ENCODE measurements at regions of chr9 and their contacts with region 1.

Region 1: DNA sequence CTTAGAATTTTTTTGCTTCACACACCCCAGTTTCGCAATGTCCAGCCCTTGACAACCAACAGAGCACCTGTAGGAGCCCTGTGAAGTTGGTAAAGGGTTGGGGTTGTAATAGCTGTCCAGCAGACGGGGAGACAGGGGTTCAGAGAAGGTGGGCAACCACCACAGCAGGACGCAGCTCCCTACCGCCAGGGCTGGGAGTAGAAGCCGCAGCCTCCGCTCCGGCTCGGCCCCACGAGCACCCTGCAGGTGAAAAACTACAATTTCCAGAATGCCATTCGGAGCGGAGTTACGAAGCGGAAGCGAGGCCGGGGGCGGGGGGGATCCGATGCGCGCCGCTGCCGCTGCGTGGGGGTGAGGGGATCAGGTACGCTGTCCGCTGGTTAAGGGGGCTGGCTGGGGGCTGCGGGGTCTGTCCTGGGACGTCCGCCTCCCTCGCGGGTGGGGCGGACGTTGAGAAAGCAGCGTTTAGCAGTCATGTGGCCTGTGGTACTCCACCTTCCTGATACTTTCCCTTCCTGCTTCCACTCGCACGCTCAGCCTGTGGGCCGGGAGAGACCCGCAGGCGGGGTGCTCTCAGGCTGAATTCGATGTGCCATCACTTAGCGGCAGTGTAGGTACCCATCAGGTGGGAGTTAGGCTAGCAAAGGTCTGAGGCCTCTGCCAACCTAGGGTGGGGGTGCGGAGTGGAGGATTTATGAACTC is at the start of gene TRMT10B:
- DNase-seq: peak; percentile 55 to 71 (median 64)
- H3K4me3 ChIP-seq: peak within 1 kb of the TSS; percentile 80 to 93 (median 82)
- H3K4me3 Mint-ChIP-seq: peak within 1 kb of the TSS; percentile 98 to 99
- H3K27ac ChIP-seq: peak within 1 kb of the TSS; percentile 66 to 94
- H3K27ac Mint-ChIP-seq: peak within 1 kb of the TSS; percentile 85 to 98 (median 94)
- H3K4me1 ChIP-seq: peaks cover 13 to 15% of the 10 kb centered on the region in 2 donors
- H3K4me1 Mint-ChIP-seq: peaks cover 19% of the 10 kb centered on the region
- H3K27me3 ChIP-seq: no peaks in the 10 kb centered on the region
- H3K27me3 Mint-ChIP-seq: peaks cover 0 to 6% (median 1%) of the 10 kb centered on the region in 3 donors
- CTCF ChIP-seq: no peak
- polyA plus RNA-seq, gene TRMT10B: 5.2 to 12.4 (median 9.4) TPM

Region 2: DNA sequence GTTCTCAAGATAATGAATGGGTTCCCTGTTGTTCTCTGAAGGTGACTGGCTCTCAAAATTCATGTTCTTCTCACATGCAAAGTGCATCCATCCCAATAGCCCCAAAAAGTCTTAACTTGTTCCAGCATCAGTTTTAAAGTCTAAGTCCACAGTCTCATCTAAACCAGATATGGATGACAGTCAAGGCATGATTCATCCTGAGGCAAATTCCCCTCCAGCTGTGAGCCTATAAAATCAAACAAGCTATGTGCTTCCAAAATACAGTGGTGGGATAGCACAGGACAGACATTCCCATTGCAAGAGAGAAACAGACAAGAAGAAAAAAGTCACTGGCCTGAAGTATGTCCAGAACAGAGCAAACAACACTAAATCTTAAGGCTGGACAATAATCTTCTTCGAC is 202.9 kb before region 1 on chr9:
- intact Hi-C with region 1: no loop called
- DNase-seq: no peak
- H3K4me3 ChIP-seq: no peak overlapping the region
- H3K4me3 Mint-ChIP-seq: no peak overlapping the region
- H3K27ac ChIP-seq: no peak overlapping the region
- H3K27ac Mint-ChIP-seq: no peak overlapping the region
- H3K4me1 ChIP-seq: no peaks in the 10 kb centered on the region
- H3K4me1 Mint-ChIP-seq: no peaks in the 10 kb centered on the region
- H3K27me3 ChIP-seq: no peaks in the 10 kb centered on the region
- H3K27me3 Mint-ChIP-seq: peaks cover 0 to 2% (median 2%) of the 10 kb centered on the region in 3 donors
- CTCF ChIP-seq: no peak

Region 3: DNA sequence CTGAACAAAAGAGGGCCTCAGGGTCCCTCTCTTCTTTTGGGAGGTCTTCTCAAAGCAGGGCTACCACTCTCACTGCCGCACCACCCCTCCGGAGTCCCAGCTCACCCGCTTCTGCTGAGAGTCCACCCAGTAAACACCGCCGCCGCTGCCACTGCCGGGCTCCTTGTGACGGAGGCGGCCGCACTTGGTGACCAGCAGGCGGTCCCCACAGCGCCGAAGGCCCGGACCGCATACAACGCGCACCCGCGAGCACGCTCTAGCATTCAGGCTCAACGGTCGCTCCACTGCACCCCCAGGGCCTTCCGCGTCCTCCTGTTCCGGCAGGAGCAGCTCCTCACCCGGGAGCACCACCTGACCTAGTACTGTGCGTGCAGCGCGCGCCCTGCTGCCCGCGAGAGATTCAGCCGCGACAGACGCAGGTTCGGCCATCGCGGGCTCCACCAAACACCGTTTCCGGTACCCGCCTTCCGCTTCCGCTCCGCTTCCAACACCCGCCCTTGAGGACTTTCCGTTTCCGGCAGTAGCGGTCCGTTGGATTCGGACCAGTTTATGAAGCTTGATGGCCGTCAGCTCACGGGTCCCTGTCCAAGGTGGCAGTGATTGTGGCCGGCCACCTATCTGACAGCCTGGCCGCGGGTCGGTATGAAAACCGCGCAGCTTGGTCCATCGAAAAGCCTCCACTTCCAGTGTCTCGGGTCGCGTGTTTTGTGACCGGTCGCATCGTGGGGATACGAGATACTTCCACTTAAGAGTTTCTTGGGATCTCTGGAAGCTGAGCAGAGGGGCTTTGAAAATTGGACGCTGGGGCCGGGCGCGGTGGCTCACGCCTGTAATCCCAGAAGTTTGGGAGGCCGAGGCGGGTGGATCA is 31.2 kb after region 1 on chr9 and contains the start of gene EXOSC3:
- intact Hi-C with region 1: loop called in 1 of 2 experiments (anchors 5 kb)
- DNase-seq: peak; percentile 88 to 90 (median 90)
- H3K4me3 ChIP-seq: peak within 1 kb of the TSS; percentile 73 to 97 (median 84)
- H3K4me3 Mint-ChIP-seq: peak within 1 kb of the TSS; percentile 97 to 98
- H3K27ac ChIP-seq: peak within 1 kb of the TSS; percentile 82 to 89
- H3K27ac Mint-ChIP-seq: peak within 1 kb of the TSS; percentile 88 to 96 (median 95)
- H3K4me1 ChIP-seq: peaks cover 24 to 29% of the 10 kb centered on the region in 2 donors
- H3K4me1 Mint-ChIP-seq: peaks cover 31% of the 10 kb centered on the region
- H3K27me3 ChIP-seq: no peaks in the 10 kb centered on the region
- H3K27me3 Mint-ChIP-seq: peaks cover 2 to 10% (median 7%) of the 10 kb centered on the region in 3 donors
- CTCF ChIP-seq: no peak
- polyA plus RNA-seq, gene EXOSC3: 9.8 to 25.2 (median 19.6) TPM

Region 4: DNA sequence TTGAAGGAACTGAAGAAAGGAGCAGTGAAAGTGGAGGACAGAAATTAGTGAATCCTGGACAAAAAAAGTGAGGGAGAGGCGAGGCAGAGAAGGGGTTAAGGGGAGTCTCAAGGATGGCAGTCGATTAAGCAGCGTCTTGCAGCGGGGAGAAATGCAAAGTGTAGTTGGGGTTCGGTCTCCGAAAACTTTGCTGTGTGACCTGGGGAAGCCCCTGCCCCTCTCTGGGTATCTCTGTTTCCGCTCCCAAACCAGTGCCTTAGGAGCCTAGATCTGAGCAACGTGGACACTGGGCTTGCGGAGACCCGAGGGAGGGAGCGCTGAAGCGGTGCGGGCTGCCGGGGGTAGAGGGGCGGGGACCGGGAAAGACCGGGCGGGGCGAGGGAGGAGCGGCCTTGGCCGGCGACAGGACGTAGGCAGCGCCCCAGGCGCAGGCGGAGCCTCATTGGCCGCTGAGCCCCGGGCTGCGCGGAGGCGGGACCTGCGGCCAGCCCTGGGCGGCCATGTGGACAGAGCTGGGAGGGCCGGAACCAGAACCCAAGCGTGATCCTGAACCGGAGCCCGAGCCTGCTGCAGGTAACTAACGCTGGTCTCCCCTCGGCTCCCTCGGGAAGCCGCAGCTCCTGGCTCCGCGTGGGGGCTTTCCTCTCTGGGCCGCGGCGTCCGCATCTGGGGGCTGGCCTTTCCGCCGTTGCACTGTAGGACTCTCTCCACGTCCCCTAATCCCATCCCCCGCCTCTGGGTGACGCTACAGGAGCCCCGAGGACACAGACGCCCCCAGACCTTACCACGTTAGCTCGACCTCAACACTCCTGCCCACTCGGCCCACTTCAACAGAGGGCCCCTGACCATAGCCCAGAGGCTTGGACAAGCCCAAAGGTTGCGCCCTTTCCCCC is 638.8 kb after region 1 on chr9 and contains the start of gene ALDH1B1:
- intact Hi-C with region 1: loop called in 1 of 2 experiments (anchors 10 kb)
- DNase-seq: peak; percentile 64 to 85 (median 73)
- H3K4me3 ChIP-seq: peak within 1 kb of the TSS; percentile 54 to 83 (median 63)
- H3K4me3 Mint-ChIP-seq: peak within 1 kb of the TSS; percentile 94 to 97
- H3K27ac ChIP-seq: peak within 1 kb of the TSS in 1 of 2 donors; percentile 64
- H3K27ac Mint-ChIP-seq: peak within 1 kb of the TSS; percentile 76 to 93 (median 84)
- H3K4me1 ChIP-seq: peaks cover 10 to 15% of the 10 kb centered on the region in 2 donors
- H3K4me1 Mint-ChIP-seq: peaks cover 18% of the 10 kb centered on the region
- H3K27me3 ChIP-seq: no peaks in the 10 kb centered on the region
- H3K27me3 Mint-ChIP-seq: peaks cover 2 to 10% (median 8%) of the 10 kb centered on the region in 3 donors
- CTCF ChIP-seq: no peak
- polyA plus RNA-seq, gene ALDH1B1: 1.00 to 4.5 (median 3.8) TPM

Measured in CD14-positive monocyte (primary cell).